Mammary epithelial cell (primary cell): ENCODE measurements at regions of chr10 and their contacts with region 1.

Region 1: DNA sequence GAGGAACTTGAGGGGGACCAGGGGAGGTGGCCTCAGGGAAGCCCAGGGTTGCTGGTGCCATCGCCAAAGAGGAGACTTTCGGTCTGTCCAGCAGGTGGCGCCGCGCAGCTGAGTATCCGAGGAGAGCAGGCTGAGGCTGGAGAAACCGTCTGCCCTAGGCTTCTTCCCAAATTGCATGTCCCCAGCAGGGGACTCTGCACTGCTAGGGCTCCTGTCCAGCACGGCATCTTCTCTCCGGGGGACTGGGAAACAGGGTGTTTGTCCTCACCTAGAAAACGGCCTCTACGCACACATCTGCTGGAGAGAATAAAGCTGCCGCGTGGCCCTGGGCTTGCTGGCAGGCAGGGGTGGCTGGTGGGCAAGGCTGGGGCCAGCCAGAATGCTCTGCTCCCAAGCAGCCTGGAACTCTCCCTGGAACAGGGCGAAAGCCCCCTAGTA is 161.9 kb downstream of the SH2D4B start:
- DNase-seq: peak; percentile 40
- H3K4me3 ChIP-seq: no peak overlapping the region
- H3K27ac ChIP-seq: no peak overlapping the region
- H3K4me1 ChIP-seq: no peaks in the 10 kb centered on the region
- H3K27me3 ChIP-seq: no peaks in the 10 kb centered on the region
- CTCF ChIP-seq: peak; percentile 74 to 89

Region 2: DNA sequence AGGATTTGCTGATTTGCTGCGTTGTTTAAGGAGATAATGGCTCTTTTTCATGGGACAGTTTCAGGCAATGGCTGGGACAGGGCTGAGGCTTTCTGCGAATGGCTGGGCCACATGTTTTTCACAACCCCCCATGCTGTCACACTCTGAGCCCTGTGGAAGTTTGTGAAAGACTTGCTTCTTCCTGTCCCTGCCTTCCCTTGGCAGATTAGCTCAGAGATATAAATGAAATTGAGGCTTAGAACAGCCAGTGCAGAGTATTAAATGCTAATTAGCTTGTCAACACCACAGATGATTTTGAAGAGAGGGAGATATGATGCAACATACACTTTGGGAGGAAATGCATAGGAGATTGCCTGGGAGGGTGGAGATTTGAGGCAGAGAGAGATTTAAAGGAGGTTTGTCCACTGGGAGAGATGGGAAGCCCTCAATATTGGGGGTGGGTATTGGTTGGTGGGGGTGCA is 70.1 kb after region 1 on chr10:
- CTCF ChIA-PET with region 1: no interaction called
- dilution Hi-C with region 1: no loop called
- in situ Hi-C with region 1: no loop called
- intact Hi-C with region 1: loop called (anchors 10 kb)
- DNase-seq: no peak
- H3K4me3 ChIP-seq: no peak overlapping the region
- H3K27ac ChIP-seq: no peak overlapping the region
- H3K4me1 ChIP-seq: no peaks in the 10 kb centered on the region
- H3K27me3 ChIP-seq: no peaks in the 10 kb centered on the region
- CTCF ChIP-seq: no peak